ENCODE measurements at regions of chr14 and their contacts with region 1.

Region 1: DNA sequence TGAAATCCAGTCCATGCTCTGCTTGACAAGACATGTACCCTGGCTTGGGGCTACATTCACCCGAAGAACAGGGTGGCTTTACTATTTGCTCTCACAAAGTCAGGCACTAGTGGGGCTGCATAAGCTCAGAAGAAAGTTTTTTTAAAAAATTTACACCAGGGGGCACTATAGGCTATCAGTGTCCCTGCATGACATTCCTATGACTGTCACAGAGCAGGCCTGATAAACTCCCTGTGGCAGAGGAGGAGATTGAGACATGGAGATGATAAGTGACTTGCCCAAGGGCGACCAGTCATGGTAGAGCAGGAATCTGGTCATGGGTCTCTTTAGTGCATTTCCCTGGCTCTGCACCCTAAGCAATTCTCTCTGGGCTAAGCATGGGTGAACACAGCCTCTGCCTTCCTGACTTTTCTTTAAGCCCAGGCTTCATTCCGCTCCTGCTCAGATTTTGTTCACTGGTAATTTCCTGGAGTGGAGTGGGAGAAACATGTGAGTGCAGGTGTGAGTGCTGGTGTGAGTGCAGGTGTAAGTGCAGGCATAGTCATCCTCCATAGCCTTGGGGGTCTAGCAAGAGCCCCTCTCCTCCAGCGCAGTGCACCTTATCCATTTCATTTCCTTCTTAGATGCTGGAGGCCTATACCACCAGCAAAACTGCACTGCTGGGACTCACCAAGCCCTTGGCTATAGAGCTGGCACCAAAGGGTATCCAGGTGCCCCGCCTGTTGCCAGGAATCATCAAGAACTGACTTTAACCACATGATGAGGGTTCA is 91.6 kb downstream of the DHRS2 start:
- DNase-seq: no peak

Region 2: DNA sequence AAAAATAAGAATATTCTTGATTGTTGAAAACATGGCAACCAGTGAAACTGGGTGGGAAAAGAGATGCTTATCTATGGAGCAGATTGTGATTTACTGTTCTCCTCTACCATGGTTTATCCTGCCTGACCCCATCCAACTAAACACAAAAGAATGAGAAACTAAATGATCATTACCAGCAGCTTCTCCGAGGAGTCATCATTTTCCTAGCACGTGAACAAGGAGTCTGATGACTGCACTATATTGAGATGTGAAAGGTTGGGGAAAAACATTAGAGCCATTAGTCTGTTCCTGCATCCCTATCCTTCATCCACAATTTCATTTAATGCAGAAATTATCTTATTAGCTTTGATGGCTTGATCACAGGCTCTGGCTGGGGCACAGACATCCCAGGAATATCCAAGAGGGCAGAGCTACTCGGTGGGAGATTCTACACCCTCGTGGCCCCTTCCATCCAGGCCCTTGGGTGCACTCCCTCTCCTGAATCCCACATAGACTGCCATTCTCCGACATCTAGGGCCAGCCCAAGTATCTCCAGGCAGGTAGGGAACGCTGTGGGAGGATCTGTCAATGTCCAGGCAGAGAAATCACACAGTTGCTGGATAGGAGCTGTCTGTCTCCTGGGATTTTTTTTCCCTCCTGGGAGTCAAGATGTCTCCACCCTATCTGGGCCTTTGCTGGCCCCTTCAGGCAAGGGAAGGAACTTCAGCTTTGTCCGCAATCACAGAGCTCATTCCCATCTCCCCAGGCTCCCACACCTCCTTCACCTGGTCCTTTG is 182.5 kb after region 1 on chr14:
- intact Hi-C with region 1: loop called (anchors 10 kb)
- DNase-seq: peak in 3 of 10 donors; percentile 31 to 45 (median 37)

Region 3: GRCh38 chr14:24070285-24071143 is 342.8 kb after region 1 on chr14:
- intact Hi-C with region 1: no loop called
- DNase-seq: peak in 1 of 10 donors; percentile 55